PC-3 (cell line): ENCODE measurements at regions of chr19 and their contacts with region 1.

Region 1: DNA sequence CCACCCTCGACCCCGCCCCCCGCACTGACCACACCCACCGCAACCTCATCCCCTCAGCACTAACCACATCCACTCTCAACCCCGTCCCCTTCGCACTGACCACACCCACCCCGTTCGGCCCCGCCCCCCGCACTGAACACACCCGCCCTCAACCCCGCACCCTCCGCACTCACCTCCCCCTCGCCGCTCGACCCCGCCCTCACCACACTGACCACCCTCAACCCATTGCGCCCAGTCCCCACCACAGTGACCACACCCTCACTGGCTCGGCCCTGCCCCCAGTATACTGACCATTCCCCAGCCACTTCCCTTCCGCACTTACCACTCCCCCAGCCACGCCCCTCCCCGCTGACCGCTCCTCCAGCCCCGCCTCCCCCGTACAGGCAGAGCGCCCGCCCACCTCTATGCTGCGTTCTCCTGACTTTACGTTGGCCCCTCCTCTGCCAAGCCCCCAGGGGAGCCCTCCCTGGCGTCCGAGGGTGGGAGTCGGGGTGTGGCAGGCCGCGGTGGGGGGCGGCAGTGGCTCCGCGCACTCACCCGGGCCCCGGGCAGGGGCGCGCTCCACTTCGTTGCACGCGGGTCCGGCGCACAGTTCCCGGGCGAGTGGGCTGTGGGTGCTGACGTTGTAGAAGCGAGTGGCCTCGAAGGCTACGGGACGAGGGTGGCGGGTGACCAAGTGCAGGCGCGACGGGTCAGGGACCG is 8.5 kb downstream of the F2RL3 start:
- DNase-seq: peak; percentile 76
- ATAC-seq: peak; percentile 70
- H3K4me3 ChIP-seq: peak overlapping the region; percentile 54
- H3K27ac ChIP-seq: no peak overlapping the region
- H3K4me1 ChIP-seq: peaks cover 6% of the 10 kb centered on the region; the same call in 1 of the 2 replicates
- H3K27me3 ChIP-seq: no peaks in the 10 kb centered on the region
- CTCF ChIP-seq: no peak

Region 2: DNA sequence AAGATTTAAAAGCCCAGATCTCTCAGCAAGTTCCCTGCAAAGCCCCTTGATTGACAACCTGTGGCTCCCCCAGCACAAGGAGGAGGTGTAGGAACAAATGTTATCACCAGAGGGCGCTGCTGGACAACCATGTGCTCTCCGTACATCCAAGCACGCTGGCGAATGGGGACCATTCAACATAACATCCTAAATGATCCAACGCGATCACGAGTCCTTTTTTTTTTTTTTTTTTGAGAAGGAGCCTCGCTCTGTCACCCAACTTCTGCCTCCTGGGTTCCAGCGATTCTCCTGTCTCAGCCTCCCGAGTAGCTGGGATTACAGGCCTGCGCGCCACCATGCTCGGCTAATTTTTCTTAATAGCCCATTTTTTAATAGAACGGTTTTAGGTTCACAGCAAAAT is 125.7 kb before region 1 on chr19:
- CTCF ChIA-PET with region 1: interaction called, 8 read pairs
- POLR2A ChIA-PET with region 1: no interaction called
- intact Hi-C with region 1: loop called (anchors 2 kb)
- DNase-seq: peak; percentile 93
- ATAC-seq: peak; percentile 90
- H3K4me3 ChIP-seq: no peak overlapping the region
- H3K27ac ChIP-seq: no peak overlapping the region
- H3K4me1 ChIP-seq: no peaks in the 10 kb centered on the region
- H3K27me3 ChIP-seq: no peaks in the 10 kb centered on the region
- CTCF ChIP-seq: peak; percentile 87

Region 3: DNA sequence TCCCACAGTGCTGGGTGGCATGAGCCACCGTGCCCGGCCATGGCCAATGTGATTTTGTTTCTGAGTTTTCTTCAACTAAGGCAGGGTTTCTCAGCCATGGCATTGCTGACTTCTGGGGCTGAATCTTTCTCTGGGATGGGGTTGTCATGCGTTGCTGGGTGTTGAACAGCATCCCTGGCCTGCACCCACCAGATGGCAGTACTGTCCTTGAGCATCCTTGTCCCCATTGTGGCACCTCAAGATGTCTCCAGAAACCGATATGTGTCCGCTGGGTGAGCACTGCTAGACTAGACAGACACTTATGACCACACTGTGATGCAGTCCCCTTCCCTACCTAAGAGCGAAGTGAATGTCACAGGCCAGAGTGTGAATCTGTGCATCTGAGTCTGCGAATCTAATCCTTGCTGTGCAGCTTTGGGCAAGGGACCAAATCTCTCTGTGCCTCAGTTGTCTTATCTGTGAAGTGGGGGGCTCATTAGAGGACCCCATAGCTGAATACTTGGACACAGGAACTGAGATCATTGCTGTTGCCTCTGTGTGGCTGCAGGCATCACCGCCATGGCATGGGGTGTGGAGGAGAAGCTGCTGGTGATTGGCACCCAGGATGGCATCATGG is 118.4 kb before region 1 on chr19:
- CTCF ChIA-PET with region 1: interaction called, 8 read pairs
- POLR2A ChIA-PET with region 1: no interaction called
- intact Hi-C with region 1: loop called (anchors 1 kb)
- DNase-seq: peak; percentile 78
- ATAC-seq: peak; percentile 81
- H3K4me3 ChIP-seq: no peak overlapping the region
- H3K27ac ChIP-seq: no peak overlapping the region
- H3K4me1 ChIP-seq: no peaks in the 10 kb centered on the region
- H3K27me3 ChIP-seq: no peaks in the 10 kb centered on the region
- CTCF ChIP-seq: peak; percentile 87

Region 4: DNA sequence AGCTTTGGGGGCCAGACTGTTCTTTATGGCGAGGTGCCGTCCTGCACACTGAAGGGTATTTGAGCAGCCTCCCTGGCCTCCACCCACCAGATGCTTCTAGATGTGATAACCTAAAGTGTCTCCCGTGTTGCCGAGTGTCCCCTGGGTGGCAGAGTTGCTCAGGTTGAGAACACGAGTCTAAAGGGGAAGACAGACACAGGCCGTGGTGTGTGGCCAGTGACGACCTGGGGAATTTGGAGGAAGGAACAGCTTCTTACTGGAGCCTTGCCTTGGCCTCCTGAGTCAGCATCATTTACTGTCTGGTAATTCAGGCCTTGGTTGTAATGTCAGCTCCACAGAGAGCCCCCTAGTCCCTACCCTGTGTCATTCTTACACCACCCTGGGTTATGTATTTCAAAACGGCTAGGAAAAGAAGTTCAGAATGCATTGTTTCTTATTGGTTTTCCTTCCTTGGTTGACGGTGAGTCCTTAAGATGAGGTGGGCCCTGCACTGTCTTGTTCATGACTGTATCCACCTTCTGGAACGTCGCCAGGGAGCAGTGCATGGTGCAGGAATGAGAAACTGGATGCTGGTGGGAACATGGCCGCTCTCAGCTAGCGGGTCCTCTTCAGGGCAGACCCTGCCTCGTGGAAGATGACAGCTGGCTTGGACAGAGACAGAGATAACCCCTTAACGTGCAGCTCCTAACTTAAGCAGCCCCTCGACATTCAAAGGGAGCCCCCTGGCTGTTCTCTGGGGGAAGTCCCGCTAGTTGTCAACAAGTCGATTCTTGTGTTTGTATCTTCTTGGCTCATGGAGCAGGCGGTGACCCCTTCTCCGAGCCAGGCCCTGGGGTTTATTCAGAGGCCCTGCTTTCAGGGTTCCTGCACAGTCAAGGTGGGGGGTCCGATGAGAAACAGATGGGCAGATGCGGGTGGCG is 60.9 kb before region 1 on chr19:
- CTCF ChIA-PET with region 1: no interaction called
- POLR2A ChIA-PET with region 1: no interaction called
- intact Hi-C with region 1: loop called (anchors 10 kb)
- DNase-seq: no peak
- ATAC-seq: no peak; the same call in 1 of the 2 replicates
- H3K4me3 ChIP-seq: no peak overlapping the region
- H3K27ac ChIP-seq: no peak overlapping the region
- H3K4me1 ChIP-seq: peaks cover 12% of the 10 kb centered on the region
- H3K27me3 ChIP-seq: no peaks in the 10 kb centered on the region
- CTCF ChIP-seq: no peak

Region 5: GRCh38 chr19:16867211-16867610 is 30.1 kb before region 1 on chr19:
- CTCF ChIA-PET with region 1: no interaction called
- POLR2A ChIA-PET with region 1: no interaction called
- intact Hi-C with region 1: no loop called
- DNase-seq: no peak
- ATAC-seq: 0 out of 2 replicates have a peak, but pooled peaks have one; percentile 33
- H3K4me3 ChIP-seq: no peak overlapping the region
- H3K27ac ChIP-seq: no peak overlapping the region
- H3K4me1 ChIP-seq: no peaks in the 10 kb centered on the region
- H3K27me3 ChIP-seq: no peaks in the 10 kb centered on the region
- CTCF ChIP-seq: no peak

Region 6: GRCh38 chr19:16938211-16938610 is 40.9 kb after region 1 on chr19:
- CTCF ChIA-PET with region 1: no interaction called
- POLR2A ChIA-PET with region 1: no interaction called
- intact Hi-C with region 1: no loop called
- DNase-seq: no peak
- ATAC-seq: no peak
- H3K4me3 ChIP-seq: no peak overlapping the region
- H3K27ac ChIP-seq: no peak overlapping the region
- H3K4me1 ChIP-seq: no peaks in the 10 kb centered on the region
- H3K27me3 ChIP-seq: 0 out of 2 replicates have a peak, but pooled peaks cover 3% of the 10 kb centered on the region
- CTCF ChIP-seq: no peak

Region 7: DNA sequence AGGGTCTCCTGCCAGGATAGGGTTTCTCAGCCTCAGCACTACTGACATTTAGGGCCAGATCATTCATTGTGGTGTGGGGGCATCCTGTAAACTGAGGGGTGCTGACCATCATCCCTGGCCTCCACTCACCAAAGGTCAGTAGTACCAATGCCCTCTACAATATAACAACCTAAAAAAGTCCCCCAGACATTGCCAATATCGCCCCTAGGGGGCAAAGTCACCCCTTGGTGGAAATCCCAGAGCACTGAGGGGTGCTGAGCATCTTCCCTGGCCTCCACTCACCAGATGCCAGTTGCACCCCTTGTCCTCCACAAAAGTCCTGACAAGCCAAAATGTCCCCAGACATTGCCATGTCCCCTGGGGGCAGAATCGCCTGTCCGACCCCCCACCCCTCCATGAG is 107.7 kb after region 1 on chr19:
- CTCF ChIA-PET with region 1: no interaction called
- POLR2A ChIA-PET with region 1: no interaction called
- intact Hi-C with region 1: no loop called
- DNase-seq: no peak
- ATAC-seq: no peak
- H3K4me3 ChIP-seq: no peak overlapping the region
- H3K27ac ChIP-seq: no peak overlapping the region
- H3K4me1 ChIP-seq: no peaks in the 10 kb centered on the region
- H3K27me3 ChIP-seq: no peaks in the 10 kb centered on the region
- CTCF ChIP-seq: peak; percentile 26; the same call in 1 of the 2 replicates

Region 8: GRCh38 chr19:17052439-17053210 is 155.3 kb after region 1 on chr19:
- CTCF ChIA-PET with region 1: no interaction called
- POLR2A ChIA-PET with region 1: no interaction called
- intact Hi-C with region 1: loop called (anchors 10 kb)
- DNase-seq: peak; percentile 71
- ATAC-seq: no peak
- H3K4me3 ChIP-seq: no peak overlapping the region
- H3K27ac ChIP-seq: no peak overlapping the region
- H3K4me1 ChIP-seq: peaks cover 10% of the 10 kb centered on the region
- H3K27me3 ChIP-seq: no peaks in the 10 kb centered on the region
- CTCF ChIP-seq: peak; percentile 75